Calu3 (cell line): ENCODE measurements at regions of chr2 and their contacts with region 1.

Region 1: DNA sequence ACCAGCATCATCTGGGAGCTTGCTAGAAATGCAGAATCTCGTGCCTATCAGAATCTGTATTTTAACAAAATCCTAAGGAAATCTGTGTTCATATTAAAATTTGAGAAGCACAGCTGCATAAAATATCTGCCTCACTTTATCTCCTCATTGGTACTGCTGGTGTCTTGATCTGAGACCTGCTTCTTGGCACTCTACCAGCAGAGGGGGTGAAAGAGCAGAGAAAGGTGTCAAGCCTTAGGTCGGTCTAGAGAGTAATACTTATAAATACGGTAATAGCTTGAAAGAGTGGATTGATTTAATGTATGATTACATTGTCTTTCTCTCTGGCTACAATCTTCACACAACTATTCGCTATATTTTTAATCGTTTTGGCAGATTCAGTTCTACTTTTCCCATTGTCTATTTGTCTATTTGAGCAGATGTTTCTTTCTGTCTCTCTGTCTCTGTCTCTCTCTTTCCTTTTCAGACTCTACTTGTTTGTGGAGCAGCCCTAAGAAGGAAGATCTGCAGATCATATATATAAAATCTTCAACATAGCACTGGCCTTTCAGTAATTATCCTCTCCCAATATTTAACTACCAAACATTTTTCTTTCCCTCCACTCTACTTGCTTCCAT is 1.7 kb upstream of the GCG start:
- DNase-seq: peak; percentile 77
- H3K4me3 Mint-ChIP-seq: peak overlapping the region; percentile 29
- H3K27ac Mint-ChIP-seq: no peak overlapping the region
- H3K4me1 Mint-ChIP-seq: peaks cover 9% of the 10 kb centered on the region
- H3K27me3 Mint-ChIP-seq: no peaks in the 10 kb centered on the region
- CTCF ChIP-seq: peak; percentile 77

Region 2: GRCh38 chr2:160666154-160667060 is 1487.3 kb before region 1 on chr2:
- CTCF ChIA-PET with region 1: no interaction called
- intact Hi-C with region 1: no loop called
- DNase-seq: peak; percentile 44
- H3K4me3 Mint-ChIP-seq: peak overlapping the region; percentile 51
- H3K27ac Mint-ChIP-seq: peak overlapping the region; percentile 40
- H3K4me1 Mint-ChIP-seq: peaks cover 38% of the 10 kb centered on the region
- H3K27me3 Mint-ChIP-seq: no peaks in the 10 kb centered on the region
- CTCF ChIP-seq: no peak

Region 3: DNA sequence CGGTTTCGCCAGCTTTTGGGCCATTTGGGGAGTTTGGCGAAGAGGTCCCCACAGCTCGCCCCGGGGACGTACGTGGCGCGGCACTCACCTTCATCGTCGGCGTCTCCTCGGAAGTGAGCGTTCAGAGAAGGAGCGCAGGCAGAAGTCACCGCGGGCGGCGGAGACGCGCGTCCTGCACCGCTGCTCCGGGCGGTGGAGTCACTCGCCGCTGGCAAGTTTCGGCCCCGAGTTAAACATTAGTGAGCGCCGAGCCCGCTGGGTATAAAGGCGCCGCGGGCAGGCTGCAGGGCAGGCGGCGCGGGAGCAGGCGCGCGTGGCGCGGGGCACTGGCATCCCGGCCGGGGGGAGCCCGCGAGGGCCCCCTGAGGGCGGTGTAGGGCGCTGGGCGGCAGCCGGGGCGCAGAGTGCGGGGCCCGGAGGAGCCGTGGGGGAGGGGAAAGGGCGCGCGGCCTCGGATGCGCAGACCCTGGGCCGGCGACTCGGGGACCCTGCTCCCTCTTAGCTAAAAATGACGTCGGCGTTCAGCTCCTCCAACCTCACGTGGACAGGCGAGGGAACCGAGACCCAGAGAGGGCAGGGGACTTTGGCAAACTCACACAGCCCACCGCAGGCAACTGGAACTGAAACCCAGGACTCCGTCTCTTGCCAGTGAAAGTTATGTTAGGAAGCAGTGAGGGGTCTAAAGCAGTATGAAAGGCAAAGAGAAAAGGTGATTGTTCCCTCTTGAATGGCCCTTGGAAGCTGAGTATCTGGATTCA is 79.6 kb before region 1 on chr2 and contains the start of gene DPP4:
- CTCF ChIA-PET with region 1: no interaction called
- intact Hi-C with region 1: no loop called
- DNase-seq: peak; percentile 71
- H3K4me3 Mint-ChIP-seq: peak within 1 kb of the TSS; percentile 95
- H3K27ac Mint-ChIP-seq: peak within 1 kb of the TSS; percentile 75
- H3K4me1 Mint-ChIP-seq: peaks cover 33% of the 10 kb centered on the region
- H3K27me3 Mint-ChIP-seq: no peaks in the 10 kb centered on the region
- CTCF ChIP-seq: no peak
- total RNA-seq, gene DPP4: 27.6 TPM in 2 replicates

Region 4: DNA sequence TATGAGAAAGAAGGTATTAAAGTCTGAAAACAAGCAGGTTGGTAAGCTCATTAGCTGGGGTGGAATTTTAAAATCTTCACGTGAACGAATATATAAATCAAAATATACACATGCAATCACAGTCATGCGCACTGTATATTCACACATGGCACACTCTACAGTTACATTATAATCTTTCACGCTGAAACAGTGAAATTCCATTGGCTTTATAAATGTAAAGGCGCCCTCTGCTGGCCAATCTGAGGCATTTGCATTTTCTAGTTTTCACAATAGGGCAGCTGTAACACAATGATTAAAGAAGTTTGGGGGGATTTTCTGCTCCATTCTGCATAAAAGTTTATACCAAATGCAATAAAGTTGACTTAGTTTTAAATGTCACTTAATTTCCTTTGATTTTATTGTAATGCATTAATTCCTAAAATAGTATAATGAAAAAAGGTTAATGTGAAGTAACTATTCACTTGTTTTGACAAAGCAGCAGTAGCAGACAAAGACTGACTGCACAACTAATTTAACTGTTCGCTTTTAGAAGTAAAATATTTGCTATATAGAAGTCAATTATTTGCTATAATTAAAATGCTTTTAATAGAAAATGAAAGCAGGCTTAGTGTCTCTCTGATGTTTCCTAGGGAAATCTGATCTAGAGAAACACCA is 147.6 kb after region 1 on chr2:
- CTCF ChIA-PET with region 1: interaction called, 25 read pairs
- intact Hi-C with region 1: loop called (anchors 1 kb)
- DNase-seq: peak; percentile 42
- H3K4me3 Mint-ChIP-seq: no peak overlapping the region
- H3K27ac Mint-ChIP-seq: no peak overlapping the region
- H3K4me1 Mint-ChIP-seq: no peaks in the 10 kb centered on the region
- H3K27me3 Mint-ChIP-seq: no peaks in the 10 kb centered on the region
- CTCF ChIP-seq: peak; percentile 74

Region 5: DNA sequence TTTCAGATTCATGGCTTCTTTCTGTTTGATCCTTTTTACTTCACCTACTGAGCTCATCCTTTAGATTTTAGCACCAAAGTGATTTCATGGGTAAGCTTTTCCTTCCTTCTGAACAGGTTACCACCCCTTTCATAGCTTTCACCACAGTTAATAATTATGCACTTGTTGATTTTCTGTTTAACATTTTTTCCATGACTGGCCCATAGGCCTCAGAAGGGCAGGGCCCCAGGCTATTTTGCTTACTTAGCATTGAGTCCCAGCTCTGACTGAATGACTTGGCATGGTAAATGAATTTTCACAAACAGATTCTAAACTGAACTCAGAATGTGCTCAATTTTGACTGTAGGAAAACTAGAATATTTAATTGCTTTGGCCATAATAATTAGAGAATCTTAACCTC is 367.2 kb after region 1 on chr2:
- CTCF ChIA-PET with region 1: no interaction called
- intact Hi-C with region 1: no loop called
- DNase-seq: peak; percentile 25
- H3K4me3 Mint-ChIP-seq: no peak overlapping the region
- H3K27ac Mint-ChIP-seq: no peak overlapping the region
- H3K4me1 Mint-ChIP-seq: peaks cover 9% of the 10 kb centered on the region
- H3K27me3 Mint-ChIP-seq: no peaks in the 10 kb centered on the region
- CTCF ChIP-seq: no peak